A549 (cell line): ENCODE measurements at regions of chr4 and their contacts with region 1.

Region 1: DNA sequence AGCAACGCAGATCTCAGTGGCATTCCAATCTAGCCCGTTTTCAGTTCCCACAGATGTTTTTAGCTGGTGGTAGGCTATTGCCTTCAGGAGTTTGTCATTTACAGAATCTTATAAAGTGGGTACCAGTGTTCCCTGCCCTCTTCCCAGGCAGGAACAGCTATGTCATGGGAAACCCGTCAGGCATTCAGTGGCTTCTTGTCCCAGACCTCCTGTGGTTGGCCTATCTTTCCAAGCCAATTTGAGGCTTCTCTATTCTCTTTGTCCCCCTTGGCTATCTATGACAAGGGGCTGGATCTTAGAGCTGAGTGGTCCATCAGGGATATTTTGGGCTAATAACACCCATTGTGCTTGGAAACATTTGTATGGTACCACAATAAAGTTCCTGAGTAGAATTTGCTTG is 33.6 kb upstream of the RPL34 start:
- DNase-seq: no peak
- ATAC-seq: no peak
- H3K4me3 ChIP-seq: no peak overlapping the region
- H3K27ac ChIP-seq: no peak overlapping the region
- H3K4me1 ChIP-seq: no peaks in the 10 kb centered on the region
- CTCF ChIP-seq: no peak
- EP300 ChIP-seq: no peak
- POLR2A ChIP-seq: no peak
- RAD21 ChIP-seq: no peak

Region 2: GRCh38 chr4:108560616-108561015 is 26.2 kb before region 1 on chr4:
- CTCF ChIA-PET with region 1: no interaction called
- POLR2A ChIA-PET with region 1: no interaction called
- DNase-seq: no peak
- ATAC-seq: no peak
- H3K4me3 ChIP-seq: no peak overlapping the region
- H3K27ac ChIP-seq: no peak overlapping the region
- H3K4me1 ChIP-seq: no peaks in the 10 kb centered on the region
- CTCF ChIP-seq: no peak
- EP300 ChIP-seq: no peak
- POLR2A ChIP-seq: no peak
- RAD21 ChIP-seq: no peak

Region 3: GRCh38 chr4:108570993-108571569 is 15.7 kb before region 1 on chr4:
- CTCF ChIA-PET with region 1: interaction called, 10 read pairs
- POLR2A ChIA-PET with region 1: no interaction called
- DNase-seq: no peak
- ATAC-seq: no peak
- H3K4me3 ChIP-seq: no peak overlapping the region
- H3K27ac ChIP-seq: no peak overlapping the region
- H3K4me1 ChIP-seq: no peaks in the 10 kb centered on the region
- CTCF ChIP-seq: no peak
- EP300 ChIP-seq: no peak
- POLR2A ChIP-seq: no peak
- RAD21 ChIP-seq: no peak